Caki2 (cell line): ENCODE measurements at regions of chr14 and their contacts with region 1.

Region 1: GRCh38 chr14:100417466-100417865 is 94.3 kb downstream of the SLC25A47 start:
- DNase-seq: peak; percentile 92

Region 2: DNA sequence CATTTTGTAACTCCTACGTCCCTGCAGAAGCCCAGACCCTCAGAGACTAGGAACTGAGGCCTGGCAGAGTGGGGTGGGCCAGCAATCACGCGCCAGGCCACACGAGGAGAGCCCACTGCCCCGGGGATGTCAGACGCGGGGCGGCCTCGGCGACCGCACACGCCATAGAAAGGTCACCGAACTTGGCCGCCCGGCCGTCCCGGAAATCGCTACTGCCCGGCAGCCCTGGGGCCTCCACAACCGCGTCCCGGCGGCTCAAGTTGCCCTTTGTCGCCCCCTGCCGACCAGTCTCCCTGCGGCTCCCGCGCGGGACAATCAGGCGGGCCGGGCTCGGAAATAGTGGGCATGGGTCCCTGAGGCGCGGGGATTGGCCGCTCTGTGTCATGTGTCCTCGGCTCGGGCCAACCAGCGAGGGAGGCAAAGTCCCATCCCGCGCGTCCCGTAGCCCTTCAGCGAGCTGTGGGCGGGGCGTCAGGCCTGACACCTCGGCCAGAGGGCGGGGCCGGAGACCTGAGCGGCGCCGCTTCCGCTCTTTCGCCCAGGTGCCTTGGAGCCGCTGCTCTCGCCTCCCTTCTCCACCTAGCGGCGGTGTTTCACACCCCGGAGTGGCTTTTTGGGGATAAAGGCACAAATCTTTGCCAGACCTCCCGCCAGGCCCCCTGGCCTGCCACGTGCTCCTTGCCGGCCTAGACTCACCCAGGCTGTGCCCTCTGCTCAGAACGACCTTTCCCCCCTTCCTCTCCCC is 224.6 kb before region 1 on chr14:
- in situ Hi-C with region 1: no loop called
- DNase-seq: peak; percentile 97

Region 3: GRCh38 chr14:100662879-100663760 is 245.7 kb after region 1 on chr14:
- in situ Hi-C with region 1: loop called (anchors 25 kb)
- DNase-seq: peak; percentile 26

Region 4: GRCh38 chr14:100708401-100709288 is 291.2 kb after region 1 on chr14:
- in situ Hi-C with region 1: no loop called
- DNase-seq: no peak

Region 5: GRCh38 chr14:101019990-101020710 is 602.7 kb after region 1 on chr14:
- in situ Hi-C with region 1: no loop called
- DNase-seq: no peak